ENCODE measurements at regions of chr5 and their contacts with region 1.

Region 1: DNA sequence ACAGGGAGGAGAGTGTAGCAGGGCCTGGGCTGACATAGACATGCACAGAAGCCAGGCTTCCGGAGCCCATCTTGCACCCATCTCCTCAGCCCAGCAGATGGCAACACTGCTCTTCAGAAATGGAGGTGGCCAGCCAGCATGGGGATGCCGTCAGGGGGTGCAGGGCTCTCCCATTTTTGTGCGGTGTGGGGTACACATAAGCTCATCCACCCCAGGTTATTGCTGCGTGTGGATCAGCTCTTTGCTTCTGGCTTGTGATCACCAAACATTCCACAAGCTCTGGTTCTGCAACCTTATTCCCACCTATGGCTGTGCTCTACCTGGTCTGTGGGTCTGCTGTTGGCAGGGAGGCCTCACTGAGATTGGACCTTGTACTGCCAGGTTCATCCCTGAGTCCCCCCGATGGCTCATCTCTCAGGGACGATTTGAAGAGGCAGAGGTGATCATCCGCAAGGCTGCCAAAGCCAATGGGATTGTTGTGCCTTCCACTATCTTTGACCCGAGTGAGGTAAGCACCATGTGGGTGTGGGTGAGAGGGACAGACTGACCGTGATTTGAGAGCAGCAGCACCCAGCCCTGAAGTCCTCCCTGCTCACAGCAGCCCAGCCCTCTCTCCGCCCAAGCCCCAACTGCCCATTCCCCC is 17.3 kb downstream of the SLC22A5 start:
- DNase-seq: peak; percentile 72
- H3K4me3 Mint-ChIP-seq: no peak overlapping the region
- H3K27ac Mint-ChIP-seq: peak overlapping the region; percentile 54
- H3K4me1 Mint-ChIP-seq: peaks cover 61% of the 10 kb centered on the region
- H3K27me3 Mint-ChIP-seq: peaks cover 3% of the 10 kb centered on the region

Region 2: DNA sequence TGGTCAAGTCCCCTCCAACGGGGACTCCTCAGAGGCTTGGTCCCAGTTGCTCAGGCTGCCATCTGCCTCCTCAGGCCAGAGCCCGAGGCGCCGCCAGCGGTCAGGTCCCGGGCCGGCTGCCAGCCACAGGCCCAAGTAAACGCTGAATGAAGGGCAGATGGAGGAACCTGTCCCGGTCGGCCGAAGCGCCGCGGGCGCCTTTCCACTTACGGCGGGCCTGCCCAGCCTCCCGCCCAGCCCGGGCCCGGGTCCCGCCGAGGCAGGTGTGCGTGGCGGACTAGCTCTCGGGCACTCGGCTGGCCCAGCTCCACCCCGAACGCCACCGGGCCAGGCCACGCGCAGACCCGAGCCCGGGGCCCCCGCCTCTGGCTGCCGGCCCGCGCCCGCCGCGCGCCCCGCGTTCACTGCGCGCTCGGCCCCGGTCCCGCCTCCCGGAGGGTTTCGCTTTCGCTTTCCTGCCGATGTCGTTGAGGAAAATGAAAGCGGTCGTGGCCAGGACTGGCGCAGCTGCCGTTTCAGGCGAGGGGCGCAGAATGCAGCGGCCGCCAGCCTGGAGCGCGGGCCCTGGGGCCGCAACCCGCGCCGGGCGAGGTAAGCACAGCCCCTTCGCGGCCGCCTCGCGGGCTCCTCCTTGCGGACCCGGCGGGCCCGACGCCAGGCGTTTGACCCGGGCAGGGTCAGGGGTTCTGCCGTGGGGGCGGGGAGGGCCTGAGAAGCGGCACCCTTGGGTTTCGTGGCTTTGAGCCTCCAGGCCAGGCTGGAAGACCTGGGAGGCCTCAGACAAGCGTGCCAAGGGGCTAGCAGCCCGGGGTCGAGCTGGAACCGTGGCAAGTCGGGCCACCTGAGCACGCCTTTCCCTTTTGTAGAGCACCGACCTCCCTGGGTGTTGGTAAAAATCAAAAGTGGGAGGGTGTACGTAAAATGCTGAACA is 24.0 kb after region 1 on chr5:
- intact Hi-C with region 1: loop called (anchors 1 kb)
- DNase-seq: peak; percentile 90
- H3K4me3 Mint-ChIP-seq: peak overlapping the region; percentile 99
- H3K27ac Mint-ChIP-seq: peak overlapping the region; percentile 100
- H3K4me1 Mint-ChIP-seq: peaks cover 81% of the 10 kb centered on the region
- H3K27me3 Mint-ChIP-seq: no peaks in the 10 kb centered on the region

Region 3: GRCh38 chr5:132419502-132420468 is 33.0 kb after region 1 on chr5:
- intact Hi-C with region 1: loop called (anchors 1 kb)
- DNase-seq: peak; percentile 51
- H3K4me3 Mint-ChIP-seq: peak overlapping the region; percentile 80
- H3K27ac Mint-ChIP-seq: peak overlapping the region; percentile 95
- H3K4me1 Mint-ChIP-seq: peaks cover 95% of the 10 kb centered on the region
- H3K27me3 Mint-ChIP-seq: no peaks in the 10 kb centered on the region

Region 4: DNA sequence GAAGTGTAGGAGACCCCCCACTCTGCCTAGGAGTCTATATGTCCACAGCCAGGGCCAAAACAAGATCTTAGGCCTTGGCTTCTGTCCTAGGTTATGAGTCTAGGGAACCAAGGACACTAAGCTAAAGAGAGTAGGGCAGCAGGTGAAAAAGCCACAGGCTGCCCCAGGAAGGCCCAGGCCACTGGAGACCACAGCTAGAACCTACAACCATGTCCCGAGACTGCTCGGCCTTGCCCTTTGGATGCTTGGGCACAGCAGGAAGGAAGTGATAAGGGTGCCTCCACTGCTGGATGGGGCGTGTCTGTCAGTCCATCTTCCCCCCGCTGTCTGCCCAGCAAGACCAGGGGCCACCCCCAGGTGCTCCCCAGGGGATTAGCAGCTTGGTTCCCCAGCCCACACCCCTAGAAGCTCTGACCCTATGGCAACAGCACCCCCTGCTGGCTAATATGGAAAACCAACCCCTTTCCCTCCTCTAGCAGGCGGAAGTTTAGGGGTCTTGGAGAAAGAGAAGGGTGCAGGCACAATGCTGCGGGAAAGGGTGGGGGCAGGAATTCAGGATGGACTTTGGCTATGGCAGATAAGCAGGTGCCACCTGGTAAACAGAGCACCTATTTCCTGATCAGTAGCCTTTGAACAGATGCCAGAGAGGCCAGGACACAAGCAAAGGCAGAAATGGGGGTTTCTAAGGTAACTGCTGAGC is 114.3 kb after region 1 on chr5:
- intact Hi-C with region 1: loop called (anchors 1 kb)
- DNase-seq: peak; percentile 66
- H3K4me3 Mint-ChIP-seq: no peak overlapping the region
- H3K27ac Mint-ChIP-seq: peak overlapping the region; percentile 72
- H3K4me1 Mint-ChIP-seq: peaks cover 54% of the 10 kb centered on the region
- H3K27me3 Mint-ChIP-seq: peaks cover 6% of the 10 kb centered on the region

Region 5: GRCh38 chr5:132883261-132883834 is 496.6 kb after region 1 on chr5:
- intact Hi-C with region 1: loop called (anchors 1 kb)
- DNase-seq: no peak
- H3K4me3 Mint-ChIP-seq: no peak overlapping the region
- H3K27ac Mint-ChIP-seq: peak overlapping the region; percentile 22
- H3K4me1 Mint-ChIP-seq: peaks cover 24% of the 10 kb centered on the region
- H3K27me3 Mint-ChIP-seq: no peaks in the 10 kb centered on the region

Measured in activated T-helper 1 cell treated with anti-CD3 and anti-CD28 coated beads, Interleukin-12 subunit alpha, Interleukin-12 subunit beta, Interleukin-2, Interleukin-4 antibody, amounts not matched to agents 30 ng/mL and 10 ng/mL and 1 ng/mL, durations not matched to agents 14 hours and 24 hours and 36 hours (primary cell).